IMR-90 (cell line): ENCODE measurements at regions of chr10 and their contacts with region 1.

Region 1: GRCh38 chr10:37728830-37729229 is 128.6 kb downstream of the ZNF248 start:
- DNase-seq: no peak
- ATAC-seq: no peak
- H3K4me3 ChIP-seq: no peak overlapping the region
- H3K27ac ChIP-seq: no peak overlapping the region
- H3K4me1 ChIP-seq: no peaks in the 10 kb centered on the region
- H3K27me3 ChIP-seq: no peaks in the 10 kb centered on the region
- CTCF ChIP-seq: no peak
- POLR2A ChIP-seq: no peak
- RAD21 ChIP-seq: no peak

Region 2: GRCh38 chr10:37839243-37839642 is 110.4 kb after region 1 on chr10:
- CTCF ChIA-PET with region 1: no interaction called
- POLR2A ChIA-PET with region 1: interaction called, 10 read pairs
- dilution Hi-C with region 1: no loop called
- in situ Hi-C with region 1: no loop called
- intact Hi-C with region 1: no loop called
- DNase-seq: no peak
- ATAC-seq: no peak
- H3K4me3 ChIP-seq: no peak overlapping the region
- H3K27ac ChIP-seq: no peak overlapping the region
- H3K4me1 ChIP-seq: no peaks in the 10 kb centered on the region
- H3K27me3 ChIP-seq: no peaks in the 10 kb centered on the region
- CTCF ChIP-seq: no peak
- POLR2A ChIP-seq: no peak
- RAD21 ChIP-seq: no peak

Region 3: GRCh38 chr10:37992083-37992482 is 263.3 kb after region 1 on chr10:
- CTCF ChIA-PET with region 1: no interaction called
- POLR2A ChIA-PET with region 1: no interaction called
- dilution Hi-C with region 1: no loop called
- in situ Hi-C with region 1: no loop called
- intact Hi-C with region 1: no loop called
- DNase-seq: no peak
- ATAC-seq: no peak
- H3K4me3 ChIP-seq: no peak overlapping the region
- H3K27ac ChIP-seq: no peak overlapping the region
- H3K4me1 ChIP-seq: no peaks in the 10 kb centered on the region
- H3K27me3 ChIP-seq: no peaks in the 10 kb centered on the region
- CTCF ChIP-seq: no peak
- POLR2A ChIP-seq: no peak
- RAD21 ChIP-seq: no peak